MCF 10A (cell line): ENCODE measurements at regions of chr19 and their contacts with region 1.

Region 1: DNA sequence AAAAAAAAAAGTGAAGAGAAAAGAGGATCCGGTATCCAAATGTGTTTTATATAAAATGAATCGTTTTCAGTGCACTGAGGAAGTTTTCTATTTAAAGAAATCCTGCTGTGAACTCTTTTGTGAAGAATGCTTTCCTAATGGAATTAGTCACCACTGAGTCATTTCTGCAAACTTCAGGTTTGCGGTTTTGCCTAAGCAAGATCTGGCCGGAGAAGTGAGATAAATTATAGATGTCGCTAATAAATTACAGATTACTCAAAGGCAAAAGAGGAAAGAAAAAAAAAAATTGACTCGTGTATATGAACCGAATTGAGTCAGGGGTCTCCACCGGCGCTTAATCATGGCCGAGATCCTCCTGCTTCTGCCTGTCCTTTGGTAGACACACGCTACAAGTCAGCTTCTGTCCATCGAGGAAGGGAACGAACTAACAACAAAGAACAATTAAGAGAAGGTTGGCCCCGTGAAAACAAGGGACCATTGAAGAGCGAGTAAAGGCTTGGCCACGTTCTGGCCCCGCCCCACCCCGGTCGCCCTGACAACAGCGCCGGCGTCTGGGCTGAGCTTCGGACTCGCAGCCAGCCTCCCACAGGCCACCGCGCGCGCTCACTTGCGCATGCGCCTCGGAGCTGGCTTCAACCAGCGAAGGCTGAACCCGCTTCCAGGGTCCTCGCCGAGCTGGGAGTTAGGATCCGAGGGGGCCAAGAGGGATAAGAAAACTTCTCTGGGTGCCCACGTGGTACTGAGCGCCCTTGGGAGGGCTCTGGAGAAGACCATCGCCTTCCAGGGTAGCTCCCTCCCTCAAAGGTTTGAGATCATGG is 33.0 kb upstream of the MRI1 start:
- DNase-seq: peak; percentile 95
- H3K4me3 Mint-ChIP-seq: peak overlapping the region; percentile 79
- H3K27ac Mint-ChIP-seq: peak overlapping the region; percentile 99
- H3K4me1 Mint-ChIP-seq: peaks cover 18% of the 10 kb centered on the region
- H3K27me3 Mint-ChIP-seq: no peaks in the 10 kb centered on the region
- CTCF ChIP-seq: no peak

Region 2: GRCh38 chr19:13742756-13743155 is 11.4 kb after region 1 on chr19:
- CTCF ChIA-PET with region 1: interaction called, 13 read pairs
- POLR2A ChIA-PET with region 1: interaction called, 47 read pairs
- intact Hi-C with region 1: no loop called
- DNase-seq: no peak
- H3K4me3 Mint-ChIP-seq: no peak overlapping the region
- H3K27ac Mint-ChIP-seq: no peak overlapping the region
- H3K4me1 Mint-ChIP-seq: no peaks in the 10 kb centered on the region
- H3K27me3 Mint-ChIP-seq: no peaks in the 10 kb centered on the region
- CTCF ChIP-seq: no peak